CD4-positive, alpha-beta memory T cell (primary cell): ENCODE measurements at regions of chr1 and their contacts with region 1.

Region 1: DNA sequence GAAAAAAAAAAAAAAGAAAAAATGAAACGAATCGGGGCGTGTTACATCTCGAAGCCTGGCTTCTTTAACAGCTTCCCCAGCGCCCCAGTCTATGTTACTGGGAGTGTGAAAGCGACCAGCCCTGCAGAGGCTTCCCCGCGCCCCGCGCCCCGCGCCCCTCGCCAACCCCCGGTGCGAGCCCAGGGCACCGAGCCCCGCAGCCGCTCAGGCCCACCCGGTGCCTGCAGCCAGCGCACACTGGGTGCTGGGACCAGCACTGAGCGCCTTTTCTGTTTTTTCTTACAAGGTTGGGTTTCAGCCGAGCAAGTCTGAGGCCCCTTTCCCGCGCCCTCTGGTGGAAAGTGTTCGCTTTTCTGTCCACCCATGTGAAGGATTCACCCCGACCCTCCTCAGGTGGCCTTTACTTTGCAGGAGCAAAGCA is 42.1 kb upstream of the ZNF496 start:
- DNase-seq: peak; percentile 45 to 55 (median 47)
- H3K4me3 ChIP-seq: no peak overlapping the region
- H3K4me3 Mint-ChIP-seq: peak overlapping the region in 5 of 8 donors; percentile 6 to 74 (median 66)
- H3K27ac ChIP-seq: no peak overlapping the region
- H3K27ac Mint-ChIP-seq: peak overlapping the region in 1 of 7 donors; percentile 22
- H3K4me1 ChIP-seq: no peaks in the 10 kb centered on the region
- H3K4me1 Mint-ChIP-seq: peaks cover 2 to 9% (median 5%) of the 10 kb centered on the region in 4 donors
- H3K27me3 ChIP-seq: no peaks in the 10 kb centered on the region
- H3K27me3 Mint-ChIP-seq: peaks cover 3 to 5% of the 10 kb centered on the region in 2 donors

Region 2: GRCh38 chr1:246907472-246907871 is 466.3 kb before region 1 on chr1:
- CTCF ChIA-PET with region 1: interaction called, 4 read pairs
- POLR2A ChIA-PET with region 1: no interaction called
- intact Hi-C with region 1: loop called (anchors 5 kb)
- DNase-seq: peak in 4 of 5 donors; percentile 15 to 28 (median 22)
- H3K4me3 ChIP-seq: no peak overlapping the region
- H3K4me3 Mint-ChIP-seq: no peak overlapping the region
- H3K27ac ChIP-seq: no peak overlapping the region
- H3K27ac Mint-ChIP-seq: peak overlapping the region in 2 of 7 donors; percentile 46 to 85
- H3K4me1 ChIP-seq: no peaks in the 10 kb centered on the region
- H3K4me1 Mint-ChIP-seq: peaks cover 0 to 14% (median 4%) of the 10 kb centered on the region in 4 donors
- H3K27me3 ChIP-seq: no peaks in the 10 kb centered on the region
- H3K27me3 Mint-ChIP-seq: no peaks in the 10 kb centered on the region

Region 3: DNA sequence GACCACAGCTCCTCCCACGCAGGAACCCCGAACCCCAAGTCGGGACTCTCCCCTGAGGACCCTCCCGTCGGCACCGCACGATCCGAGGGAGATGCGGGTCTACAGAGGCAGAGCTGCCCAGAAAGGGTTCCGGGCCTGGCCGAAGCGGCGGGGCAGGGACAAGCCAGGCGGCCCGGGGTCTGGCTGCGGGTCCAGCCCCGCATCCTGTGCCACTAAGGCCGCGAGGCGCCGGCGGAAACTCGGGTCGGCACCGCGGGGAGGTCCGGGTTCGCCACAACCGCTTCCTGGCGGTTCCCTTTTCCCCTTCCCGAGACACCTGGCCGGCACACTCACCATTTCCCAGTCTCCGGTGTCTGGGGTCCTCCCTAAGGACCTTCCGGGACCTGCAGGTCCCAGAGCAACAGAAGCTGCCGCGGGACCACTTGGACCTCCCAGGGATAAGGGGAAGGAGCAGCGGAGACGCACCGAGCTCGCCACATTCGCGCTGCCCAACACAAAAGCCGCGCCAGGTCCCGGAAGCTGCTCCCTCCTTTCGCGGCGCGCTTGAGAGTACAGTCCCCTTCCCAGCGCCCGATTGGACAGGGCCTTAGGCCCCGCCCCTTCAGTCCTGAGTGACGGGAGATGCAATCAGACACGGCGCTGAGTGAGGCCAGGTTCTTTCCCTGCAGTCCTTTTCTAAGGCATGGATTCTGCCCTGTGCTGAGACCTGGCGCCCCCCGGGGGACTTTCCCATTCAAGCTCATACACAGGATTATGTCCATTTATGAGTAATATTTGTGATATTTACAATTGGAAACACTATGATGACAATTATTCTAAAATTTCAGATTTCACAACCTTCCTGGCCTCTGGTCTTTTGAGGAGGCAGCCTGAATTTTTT is 295.2 kb before region 1 on chr1 and contains the start of gene ZNF670:
- CTCF ChIA-PET with region 1: no interaction called
- POLR2A ChIA-PET with region 1: no interaction called
- intact Hi-C with region 1: no loop called
- DNase-seq: peak; percentile 70 to 86 (median 72)
- H3K4me3 ChIP-seq: peak within 1 kb of the TSS; percentile 67 to 73
- H3K4me3 Mint-ChIP-seq: peak within 1 kb of the TSS; percentile 89 to 94 (median 92)
- H3K27ac ChIP-seq: peak within 1 kb of the TSS; percentile 64
- H3K27ac Mint-ChIP-seq: peak within 1 kb of the TSS; percentile 75 to 91 (median 87)
- H3K4me1 ChIP-seq: peaks cover 16% of the 10 kb centered on the region
- H3K4me1 Mint-ChIP-seq: peaks cover 16 to 38% (median 23%) of the 10 kb centered on the region in 4 donors
- H3K27me3 ChIP-seq: no peaks in the 10 kb centered on the region
- H3K27me3 Mint-ChIP-seq: peaks cover 3 to 4% of the 10 kb centered on the region in 2 donors
- total RNA-seq, gene ZNF670: 2.9 to 3.3 TPM

Region 4: DNA sequence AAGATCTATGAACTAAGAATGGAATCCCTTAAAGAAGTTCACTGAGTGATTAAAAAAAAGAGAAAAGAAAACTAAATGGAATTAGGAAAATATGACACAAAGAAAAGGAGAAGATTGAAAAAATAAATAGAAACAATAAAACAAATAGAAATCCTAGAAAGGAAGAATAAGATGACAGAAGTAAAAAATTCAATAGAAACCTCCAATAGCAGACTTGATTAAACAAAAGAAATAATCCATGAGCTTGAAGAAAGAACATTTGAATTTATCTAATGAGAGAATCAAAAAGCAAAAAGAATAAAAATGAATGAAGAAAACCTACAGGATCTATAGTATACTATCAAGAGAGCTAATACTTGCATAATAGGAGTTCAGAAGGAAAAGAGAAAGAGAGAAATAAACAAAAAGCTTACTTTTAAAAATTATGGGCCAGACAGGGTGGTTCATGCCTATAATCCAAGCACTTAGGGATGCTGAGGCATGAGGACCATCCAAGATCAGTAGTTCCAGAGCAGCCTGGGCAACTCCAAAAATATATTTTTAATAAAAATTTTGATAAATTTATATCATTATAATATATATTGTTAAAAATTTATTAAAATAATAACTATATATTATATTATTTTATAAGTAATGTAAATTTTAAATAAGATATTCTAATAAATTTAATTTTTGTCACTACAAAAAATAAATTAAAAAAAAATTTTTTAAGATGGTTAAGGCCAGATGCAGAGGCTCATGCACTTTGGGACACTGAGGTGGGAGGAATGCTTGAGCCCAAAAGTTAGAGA is 127.2 kb before region 1 on chr1:
- CTCF ChIA-PET with region 1: no interaction called
- POLR2A ChIA-PET with region 1: no interaction called
- intact Hi-C with region 1: no loop called
- DNase-seq: no peak
- H3K4me3 ChIP-seq: no peak overlapping the region
- H3K4me3 Mint-ChIP-seq: no peak overlapping the region
- H3K27ac ChIP-seq: no peak overlapping the region
- H3K27ac Mint-ChIP-seq: no peak overlapping the region
- H3K4me1 ChIP-seq: no peaks in the 10 kb centered on the region
- H3K4me1 Mint-ChIP-seq: no peaks in the 10 kb centered on the region
- H3K27me3 ChIP-seq: no peaks in the 10 kb centered on the region
- H3K27me3 Mint-ChIP-seq: peaks cover 0 to under 1% of the 10 kb centered on the region in 2 donors

Region 5: DNA sequence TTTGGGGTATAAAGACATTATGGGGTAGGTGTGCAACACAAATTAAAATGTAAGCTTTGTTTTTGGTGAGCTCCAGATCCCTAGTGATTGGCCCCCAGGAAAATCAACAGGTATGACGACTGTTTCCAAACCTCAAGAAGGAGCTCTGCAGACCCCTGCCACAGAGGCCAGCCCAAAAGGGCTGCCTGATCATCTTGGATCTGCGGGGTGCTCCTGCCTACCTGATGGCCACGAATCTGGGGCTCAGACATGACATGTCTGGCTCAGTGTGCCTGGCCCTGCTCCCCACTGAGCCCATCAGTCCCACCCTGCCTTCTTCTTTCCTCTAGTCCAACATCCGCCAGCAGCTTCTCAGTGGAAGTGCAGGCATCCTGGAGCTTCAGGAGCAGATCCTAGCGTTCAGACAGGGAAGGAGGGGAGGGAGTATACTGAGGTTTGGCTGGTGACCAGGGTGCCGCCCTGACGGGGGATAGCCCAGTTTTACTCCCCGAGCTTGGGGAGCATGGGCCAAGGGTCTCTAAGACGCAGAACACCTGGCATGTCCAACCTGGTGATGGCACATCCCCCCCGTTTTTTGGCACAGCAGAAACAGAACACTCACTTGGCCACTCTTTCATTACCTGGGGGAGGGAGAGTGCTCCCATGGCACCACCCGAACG is 73.9 kb before region 1 on chr1:
- CTCF ChIA-PET with region 1: no interaction called
- POLR2A ChIA-PET with region 1: no interaction called
- intact Hi-C with region 1: no loop called
- DNase-seq: no peak
- H3K4me3 ChIP-seq: no peak overlapping the region
- H3K4me3 Mint-ChIP-seq: no peak overlapping the region
- H3K27ac ChIP-seq: no peak overlapping the region
- H3K27ac Mint-ChIP-seq: no peak overlapping the region
- H3K4me1 ChIP-seq: no peaks in the 10 kb centered on the region
- H3K4me1 Mint-ChIP-seq: peaks cover 0 to 3% (median 0%) of the 10 kb centered on the region in 4 donors
- H3K27me3 ChIP-seq: no peaks in the 10 kb centered on the region
- H3K27me3 Mint-ChIP-seq: peaks cover 0 to 4% of the 10 kb centered on the region in 2 donors

Region 6: GRCh38 chr1:247362153-247362552 is 11.6 kb before region 1 on chr1:
- CTCF ChIA-PET with region 1: interaction called, 15 read pairs
- POLR2A ChIA-PET with region 1: no interaction called
- intact Hi-C with region 1: no loop called
- DNase-seq: no peak
- H3K4me3 ChIP-seq: no peak overlapping the region
- H3K4me3 Mint-ChIP-seq: no peak overlapping the region
- H3K27ac ChIP-seq: no peak overlapping the region
- H3K27ac Mint-ChIP-seq: no peak overlapping the region
- H3K4me1 ChIP-seq: no peaks in the 10 kb centered on the region
- H3K4me1 Mint-ChIP-seq: peaks cover 0 to 3% (median under 1%) of the 10 kb centered on the region in 4 donors
- H3K27me3 ChIP-seq: no peaks in the 10 kb centered on the region
- H3K27me3 Mint-ChIP-seq: peaks cover 29 to 34% of the 10 kb centered on the region in 2 donors

Region 7: GRCh38 chr1:247415423-247416361 is 42.0 kb after region 1 on chr1 and contains the start of gene NLRP3:
- CTCF ChIA-PET with region 1: interaction called, 19 read pairs
- POLR2A ChIA-PET with region 1: interaction called, 7 read pairs
- intact Hi-C with region 1: no loop called
- DNase-seq: peak; percentile 43 to 72 (median 60)
- H3K4me3 ChIP-seq: peak within 1 kb of the TSS; percentile 64 to 70
- H3K4me3 Mint-ChIP-seq: peak within 1 kb of the TSS; percentile 90 to 98 (median 93)
- H3K27ac ChIP-seq: peak within 1 kb of the TSS; percentile 64
- H3K27ac Mint-ChIP-seq: peak within 1 kb of the TSS; percentile 85 to 95 (median 92)
- H3K4me1 ChIP-seq: peaks cover 53% of the 10 kb centered on the region
- H3K4me1 Mint-ChIP-seq: peaks cover 39 to 61% (median 46%) of the 10 kb centered on the region in 4 donors
- H3K27me3 ChIP-seq: no peaks in the 10 kb centered on the region
- H3K27me3 Mint-ChIP-seq: no peaks in the 10 kb centered on the region
- total RNA-seq, gene NLRP3: 13.8 to 14.6 TPM

Region 8: GRCh38 chr1:247475793-247476192 is 102.1 kb after region 1 on chr1:
- CTCF ChIA-PET with region 1: interaction called, 15 read pairs
- POLR2A ChIA-PET with region 1: no interaction called
- intact Hi-C with region 1: no loop called
- DNase-seq: no peak
- H3K4me3 ChIP-seq: no peak overlapping the region
- H3K4me3 Mint-ChIP-seq: no peak overlapping the region
- H3K27ac ChIP-seq: no peak overlapping the region
- H3K27ac Mint-ChIP-seq: no peak overlapping the region
- H3K4me1 ChIP-seq: no peaks in the 10 kb centered on the region
- H3K4me1 Mint-ChIP-seq: no peaks in the 10 kb centered on the region
- H3K27me3 ChIP-seq: no peaks in the 10 kb centered on the region
- H3K27me3 Mint-ChIP-seq: peaks cover 0 to 2% of the 10 kb centered on the region in 2 donors

Region 9: GRCh38 chr1:247487057-247487456 is 113.3 kb after region 1 on chr1:
- CTCF ChIA-PET with region 1: interaction called, 231 read pairs
- POLR2A ChIA-PET with region 1: interaction called, 3 read pairs
- intact Hi-C with region 1: loop called (anchors 1 kb)
- DNase-seq: peak in 4 of 5 donors; percentile 47 to 56 (median 54)
- H3K4me3 ChIP-seq: no peak overlapping the region
- H3K4me3 Mint-ChIP-seq: no peak overlapping the region
- H3K27ac ChIP-seq: no peak overlapping the region
- H3K27ac Mint-ChIP-seq: no peak overlapping the region
- H3K4me1 ChIP-seq: no peaks in the 10 kb centered on the region
- H3K4me1 Mint-ChIP-seq: no peaks in the 10 kb centered on the region
- H3K27me3 ChIP-seq: no peaks in the 10 kb centered on the region
- H3K27me3 Mint-ChIP-seq: peaks cover 7 to 10% of the 10 kb centered on the region in 2 donors